HCT116 (cell line): ENCODE measurements at regions of chr2 and their contacts with region 1.

Region 1: GRCh38 chr2:170815746-170816503 is 762 bp upstream of the GAD1 start:
- DNase-seq: peak; percentile 57
- ATAC-seq: peak; percentile 78
- H3K4me3 ChIP-seq: peak overlapping the region; percentile 53 to 67
- H3K27ac ChIP-seq: no peak overlapping the region; the same call in 1 of the 2 replicates
- H3K4me1 ChIP-seq: peaks cover 3 to 25% of the 10 kb centered on the region in 2 experiments; a peak in 3 of 4 replicates
- H3K27me3 ChIP-seq: no peaks in the 10 kb centered on the region
- CTCF ChIP-seq: peak; percentile 79 to 92 (median 83)
- POLR2A ChIP-seq: no peak
- RAD21 ChIP-seq: peak; percentile 94

Region 2: DNA sequence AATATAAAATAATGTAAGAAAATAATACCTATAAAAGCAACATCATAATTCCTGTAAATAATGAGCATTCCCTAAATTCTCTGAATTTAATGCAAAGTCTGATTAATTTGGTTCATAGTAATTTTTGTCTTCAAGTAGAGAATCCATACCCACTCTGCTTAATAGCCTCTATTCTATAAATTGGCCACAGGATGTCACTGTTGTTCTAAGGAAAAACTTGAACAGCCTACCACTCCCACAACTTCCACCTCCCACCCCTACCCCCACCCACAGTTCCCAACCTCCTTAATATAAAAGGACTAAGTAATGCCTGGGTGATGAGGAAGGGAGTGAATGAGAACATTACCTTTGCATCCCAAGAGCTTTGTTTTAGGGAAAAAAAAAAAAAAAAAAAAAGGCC is 1363.8 kb before region 1 on chr2:
- CTCF ChIA-PET with region 1: interaction called, 4 read pairs
- POLR2A ChIA-PET with region 1: no interaction called
- RAD21 ChIA-PET with region 1: interaction called in 1 of 2 experiments, 4 read pairs
- intact Hi-C with region 1: loop called (anchors 2 kb)
- DNase-seq: peak; percentile 43
- ATAC-seq: peak; percentile 96
- H3K4me3 ChIP-seq: no peak overlapping the region
- H3K27ac ChIP-seq: no peak overlapping the region
- H3K4me1 ChIP-seq: no peaks in the 10 kb centered on the region
- H3K27me3 ChIP-seq: no peaks in the 10 kb centered on the region
- CTCF ChIP-seq: peak; percentile 37 to 57 (median 54); a peak in 5 of 6 replicates
- POLR2A ChIP-seq: no peak
- RAD21 ChIP-seq: peak; percentile 76

Region 3: GRCh38 chr2:170324640-170325046 is 491.3 kb before region 1 on chr2:
- CTCF ChIA-PET with region 1: interaction called, 15 read pairs
- POLR2A ChIA-PET with region 1: interaction called, 5 read pairs
- RAD21 ChIA-PET with region 1: no interaction called
- intact Hi-C with region 1: loop called (anchors 1 kb)
- DNase-seq: peak; percentile 42
- ATAC-seq: peak; percentile 80
- H3K4me3 ChIP-seq: no peak overlapping the region
- H3K27ac ChIP-seq: no peak overlapping the region
- H3K4me1 ChIP-seq: no peaks in the 10 kb centered on the region
- H3K27me3 ChIP-seq: no peaks in the 10 kb centered on the region
- CTCF ChIP-seq: peak; percentile 80 to 84 (median 84)
- POLR2A ChIP-seq: no peak
- RAD21 ChIP-seq: peak; percentile 87

Region 4: DNA sequence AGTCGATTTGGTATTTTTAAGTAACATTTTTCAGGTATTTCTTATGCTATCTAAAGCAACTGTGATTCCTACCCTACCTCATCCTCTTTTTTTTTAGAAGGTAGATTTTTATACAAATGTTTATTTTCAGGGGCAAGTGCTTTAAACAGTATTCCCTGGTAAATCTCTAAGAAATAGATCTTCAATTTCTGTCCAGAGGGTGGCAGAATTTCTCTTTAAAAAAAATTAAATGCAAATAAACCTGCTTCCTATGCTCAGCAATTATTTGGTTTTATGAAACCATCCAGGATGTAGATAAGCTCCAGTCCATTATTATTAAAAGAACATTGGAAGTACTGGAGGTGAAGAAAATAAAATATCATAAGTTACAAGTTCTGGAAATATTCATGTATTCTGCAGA is 446.0 kb before region 1 on chr2:
- CTCF ChIA-PET with region 1: interaction called, 87 read pairs
- POLR2A ChIA-PET with region 1: no interaction called
- RAD21 ChIA-PET with region 1: interaction called, 4 read pairs
- intact Hi-C with region 1: loop called (anchors 1 kb)
- DNase-seq: peak; percentile 21
- ATAC-seq: peak; percentile 63
- H3K4me3 ChIP-seq: no peak overlapping the region
- H3K27ac ChIP-seq: no peak overlapping the region
- H3K4me1 ChIP-seq: no peaks in the 10 kb centered on the region
- H3K27me3 ChIP-seq: peaks cover 33% of the 10 kb centered on the region
- CTCF ChIP-seq: peak in 2 of 3 experiments; percentile 48 to 52; a peak in 3 of 6 replicates
- POLR2A ChIP-seq: no peak
- RAD21 ChIP-seq: peak; percentile 64

Region 5: GRCh38 chr2:170396799-170397459 is 419.0 kb before region 1 on chr2:
- CTCF ChIA-PET with region 1: interaction called, 11 read pairs
- POLR2A ChIA-PET with region 1: interaction called, 4 read pairs
- RAD21 ChIA-PET with region 1: no interaction called
- intact Hi-C with region 1: loop called (anchors 1 kb)
- DNase-seq: no peak
- ATAC-seq: peak; percentile 60
- H3K4me3 ChIP-seq: no peak overlapping the region
- H3K27ac ChIP-seq: no peak overlapping the region
- H3K4me1 ChIP-seq: no peaks in the 10 kb centered on the region
- H3K27me3 ChIP-seq: no peaks in the 10 kb centered on the region
- CTCF ChIP-seq: peak; percentile 31 to 67 (median 62); a peak in 5 of 6 replicates
- POLR2A ChIP-seq: no peak
- RAD21 ChIP-seq: peak; percentile 65

Region 6: DNA sequence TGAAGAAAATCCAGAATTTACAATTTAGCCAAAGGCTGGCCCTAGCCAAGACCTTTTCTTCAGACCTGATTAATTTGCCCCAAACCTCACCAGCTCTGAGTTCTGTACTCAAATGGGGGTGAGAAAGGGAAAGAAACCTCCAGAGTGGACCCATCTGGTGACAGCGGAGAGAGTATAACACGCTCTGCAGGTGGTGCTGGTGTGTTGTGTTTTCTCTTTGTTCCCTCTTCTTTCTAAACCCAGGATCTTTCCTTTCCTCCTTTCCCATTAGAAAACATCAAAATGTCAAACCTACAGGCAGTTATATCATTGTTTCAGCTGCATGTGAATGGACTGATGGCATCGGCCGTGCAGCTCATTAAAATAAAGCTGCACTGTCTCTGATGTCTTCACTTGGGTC is 354.0 kb before region 1 on chr2:
- CTCF ChIA-PET with region 1: interaction called, 4 read pairs
- POLR2A ChIA-PET with region 1: no interaction called
- RAD21 ChIA-PET with region 1: no interaction called
- intact Hi-C with region 1: loop called (anchors 1 kb)
- DNase-seq: no peak
- ATAC-seq: no peak
- H3K4me3 ChIP-seq: no peak overlapping the region
- H3K27ac ChIP-seq: no peak overlapping the region
- H3K4me1 ChIP-seq: no peaks in the 10 kb centered on the region
- H3K27me3 ChIP-seq: no peaks in the 10 kb centered on the region
- CTCF ChIP-seq: 0 out of 6 replicates have a peak, but pooled peaks of 2 of the 3 experiments have one; percentile 9 to 13
- POLR2A ChIP-seq: no peak
- RAD21 ChIP-seq: peak; percentile 53

Region 7: DNA sequence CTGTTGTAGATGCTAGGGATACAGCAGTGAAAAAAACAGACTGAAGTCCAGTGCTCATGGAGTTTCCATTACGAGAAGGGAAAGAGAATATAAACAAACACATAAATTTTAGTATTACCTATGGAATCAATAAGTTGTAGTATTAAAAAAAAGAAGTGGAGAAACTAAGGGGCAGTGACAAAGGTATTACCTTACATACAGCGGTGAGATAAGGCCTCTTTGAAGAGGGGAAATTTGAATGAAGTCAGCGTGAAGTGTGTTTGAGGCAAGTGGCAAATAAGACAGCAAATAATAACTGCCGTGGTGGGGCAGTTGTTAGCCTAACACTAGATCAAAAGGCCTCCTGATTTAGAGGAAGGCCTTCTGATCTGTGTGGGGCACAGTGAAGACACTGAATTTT is 286.9 kb after region 1 on chr2:
- CTCF ChIA-PET with region 1: no interaction called
- POLR2A ChIA-PET with region 1: no interaction called
- RAD21 ChIA-PET with region 1: no interaction called
- intact Hi-C with region 1: no loop called
- DNase-seq: no peak
- ATAC-seq: no peak
- H3K4me3 ChIP-seq: no peak overlapping the region
- H3K27ac ChIP-seq: no peak overlapping the region
- H3K4me1 ChIP-seq: no peaks in the 10 kb centered on the region
- H3K27me3 ChIP-seq: no peaks in the 10 kb centered on the region
- CTCF ChIP-seq: no peak
- POLR2A ChIP-seq: no peak
- RAD21 ChIP-seq: no peak